Lower leg skin (tissue), 4 donors: ENCODE measurements at regions of chr9 and their contacts with region 1.

Region 1: GRCh38 chr9:129482521-129483414 is 138.1 kb downstream of the C9orf50 start:
- DNase-seq: peak; percentile 87 to 97
- H3K4me3 ChIP-seq: peak overlapping the region; percentile 26
- CTCF ChIP-seq: no peak
- POLR2A ChIP-seq: no peak

Region 2: DNA sequence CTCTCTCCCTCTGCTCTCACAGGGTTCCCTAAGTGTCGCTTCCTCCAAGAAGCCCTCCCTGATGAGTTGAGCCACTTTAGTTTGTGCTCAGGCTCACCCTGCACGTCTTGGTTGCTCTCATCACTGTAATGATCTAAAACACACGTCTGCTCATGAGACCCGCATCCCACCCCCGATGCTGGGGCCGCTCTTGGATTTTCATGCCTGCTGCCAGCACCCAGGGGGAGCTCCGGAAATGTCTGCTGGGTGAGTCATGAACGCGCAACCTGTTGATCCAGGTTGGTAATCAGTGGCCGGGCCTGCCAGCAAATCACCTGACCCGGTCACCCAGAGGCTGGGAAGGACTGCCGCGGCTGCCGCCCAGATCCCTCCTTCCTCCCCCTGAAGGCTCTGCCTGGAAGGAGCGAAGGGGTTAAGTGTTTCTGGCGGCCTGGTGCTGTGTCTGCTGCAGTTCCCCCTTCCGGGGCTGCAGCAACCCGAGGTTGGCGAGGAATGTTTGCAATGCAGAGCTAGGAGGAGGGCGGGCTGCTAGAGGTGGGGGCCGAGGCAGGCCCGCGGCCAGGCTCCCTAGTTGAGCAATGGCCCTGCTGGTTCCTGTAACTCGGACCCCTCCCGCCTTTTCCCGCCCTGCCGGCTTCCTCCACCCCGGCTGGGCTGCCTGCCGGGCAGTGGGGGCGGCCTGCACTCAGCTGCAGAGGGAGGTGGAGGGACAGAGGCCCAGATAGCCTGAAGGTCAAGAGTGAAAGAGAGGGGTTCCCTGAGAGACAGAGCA is 148.6 kb before region 1 on chr9:
- intact Hi-C with region 1: loop called (anchors 10 kb)
- DNase-seq: peak; percentile 83 to 98
- H3K4me3 ChIP-seq: no peak overlapping the region
- CTCF ChIP-seq: no peak
- POLR2A ChIP-seq: no peak